CD4-positive, alpha-beta memory T cell (primary cell): ENCODE measurements at regions of chr10 and their contacts with region 1.

Region 1: GRCh38 chr10:74826142-74827044 is at the start of gene KAT6B:
- DNase-seq: peak; percentile 100
- H3K4me3 ChIP-seq: peak within 1 kb of the TSS; percentile 63 to 90
- H3K4me3 Mint-ChIP-seq: peak within 1 kb of the TSS; percentile 87 to 96 (median 94)
- H3K27ac ChIP-seq: peak within 1 kb of the TSS; percentile 93
- H3K27ac Mint-ChIP-seq: peak within 1 kb of the TSS; percentile 91 to 99 (median 98)
- H3K4me1 ChIP-seq: peaks cover 53% of the 10 kb centered on the region
- H3K4me1 Mint-ChIP-seq: peaks cover 60 to 80% (median 63%) of the 10 kb centered on the region in 4 donors
- H3K27me3 ChIP-seq: no peaks in the 10 kb centered on the region
- H3K27me3 Mint-ChIP-seq: no peaks in the 10 kb centered on the region
- total RNA-seq, gene KAT6B: 63.6 to 63.9 TPM

Region 2: DNA sequence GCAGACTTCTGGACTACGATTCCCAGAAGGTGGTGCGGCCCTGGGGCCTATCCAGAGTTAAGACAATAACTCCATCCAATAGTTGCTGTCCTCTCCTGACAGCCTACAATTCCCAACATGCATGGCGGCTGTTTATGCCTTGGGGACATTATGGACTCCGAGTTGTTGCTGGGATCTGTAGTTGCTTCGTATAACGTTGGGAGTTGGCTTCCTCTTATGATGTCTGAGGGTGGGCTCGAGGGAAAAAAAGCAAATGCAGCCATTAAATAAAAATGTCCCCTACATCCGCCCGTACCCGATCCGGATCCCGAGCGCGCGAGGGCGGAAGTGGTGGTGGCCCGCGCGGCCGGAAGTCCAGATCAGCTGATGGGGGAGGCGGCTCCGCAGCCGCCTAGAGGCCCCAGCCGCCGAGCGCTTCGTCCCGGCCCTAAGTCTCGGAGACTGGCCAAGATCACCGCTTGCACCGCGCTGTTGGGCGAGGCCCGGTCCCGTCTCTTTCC is 1041.1 kb before region 1 on chr10 and contains the start of gene ZSWIM8:
- CTCF ChIA-PET with region 1: no interaction called
- POLR2A ChIA-PET with region 1: no interaction called
- intact Hi-C with region 1: loop called (anchors 10 kb)
- DNase-seq: peak; percentile 85 to 96 (median 89)
- H3K4me3 ChIP-seq: peak within 1 kb of the TSS; percentile 62 to 64
- H3K4me3 Mint-ChIP-seq: peak within 1 kb of the TSS; percentile 94 to 99 (median 98)
- H3K27ac ChIP-seq: peak within 1 kb of the TSS; percentile 77
- H3K27ac Mint-ChIP-seq: peak within 1 kb of the TSS; percentile 95 to 99 (median 99)
- H3K4me1 ChIP-seq: peaks cover 54% of the 10 kb centered on the region
- H3K4me1 Mint-ChIP-seq: peaks cover 35 to 67% (median 50%) of the 10 kb centered on the region in 4 donors
- H3K27me3 ChIP-seq: no peaks in the 10 kb centered on the region
- H3K27me3 Mint-ChIP-seq: peaks cover 2% of the 10 kb centered on the region in 2 donors
- total RNA-seq, gene ZSWIM8: 93.3 to 100 TPM

Region 3: DNA sequence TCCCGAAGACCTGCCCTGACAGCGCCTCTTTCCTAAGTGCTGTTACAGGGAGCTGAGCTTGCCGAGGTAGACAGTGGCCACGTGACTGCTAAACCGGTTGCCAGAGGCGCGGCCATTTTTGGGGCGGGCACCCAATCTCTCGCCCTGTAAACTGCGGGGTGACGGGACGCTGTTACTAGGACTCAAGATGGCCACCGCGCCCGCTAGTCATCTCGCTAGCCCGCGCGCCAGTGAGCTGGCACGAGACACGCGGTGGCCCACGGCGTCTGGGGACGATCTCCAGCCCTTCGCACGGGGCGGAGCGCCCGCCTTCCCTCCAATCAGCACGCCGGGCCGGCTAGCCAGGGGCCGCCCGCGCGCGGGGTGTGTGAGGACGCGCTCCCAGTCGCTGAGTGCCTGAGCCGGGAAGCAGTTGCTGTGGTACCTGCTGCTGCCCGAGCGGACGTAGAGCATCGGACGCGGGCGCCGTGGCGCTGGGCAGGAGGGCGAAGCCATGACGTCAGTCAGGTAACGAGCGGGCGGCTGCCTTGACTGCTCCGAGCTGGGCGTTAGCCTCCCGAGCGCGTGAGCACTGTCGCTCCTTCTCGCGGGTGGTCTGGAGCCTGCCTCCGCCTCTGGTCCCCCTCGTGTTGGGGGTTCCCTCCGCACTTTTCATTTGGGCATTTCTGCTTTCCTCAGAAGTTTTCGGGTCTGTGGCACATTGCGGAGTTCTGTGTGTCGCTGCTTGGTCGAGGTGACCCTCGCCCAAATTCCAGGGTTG is 649.8 kb before region 1 on chr10:
- CTCF ChIA-PET with region 1: no interaction called
- POLR2A ChIA-PET with region 1: interaction called, 5 read pairs
- intact Hi-C with region 1: loop called (anchors 1 kb)
- DNase-seq: peak; percentile 95 to 98 (median 97)
- H3K4me3 ChIP-seq: peak overlapping the region; percentile 82 to 92
- H3K4me3 Mint-ChIP-seq: peak overlapping the region; percentile 90 to 94 (median 93)
- H3K27ac ChIP-seq: peak overlapping the region; percentile 76
- H3K27ac Mint-ChIP-seq: peak overlapping the region; percentile 96 to 98 (median 97)
- H3K4me1 ChIP-seq: peaks cover 42% of the 10 kb centered on the region
- H3K4me1 Mint-ChIP-seq: peaks cover 24 to 49% (median 39%) of the 10 kb centered on the region in 4 donors
- H3K27me3 ChIP-seq: no peaks in the 10 kb centered on the region
- H3K27me3 Mint-ChIP-seq: no peaks in the 10 kb centered on the region

Region 4: GRCh38 chr10:74589226-74589673 is 237.1 kb before region 1 on chr10:
- CTCF ChIA-PET with region 1: interaction called, 3 read pairs
- POLR2A ChIA-PET with region 1: interaction called, 58 read pairs
- intact Hi-C with region 1: loop called (anchors 1 kb)
- DNase-seq: peak; percentile 89 to 98 (median 95)
- H3K4me3 ChIP-seq: no peak overlapping the region
- H3K4me3 Mint-ChIP-seq: peak overlapping the region in 7 of 8 donors; percentile 19 to 84 (median 63)
- H3K27ac ChIP-seq: peak overlapping the region; percentile 64
- H3K27ac Mint-ChIP-seq: peak overlapping the region; percentile 88 to 97 (median 95)
- H3K4me1 ChIP-seq: peaks cover 63% of the 10 kb centered on the region
- H3K4me1 Mint-ChIP-seq: peaks cover 44 to 62% (median 53%) of the 10 kb centered on the region in 4 donors
- H3K27me3 ChIP-seq: no peaks in the 10 kb centered on the region
- H3K27me3 Mint-ChIP-seq: no peaks in the 10 kb centered on the region

Region 5: DNA sequence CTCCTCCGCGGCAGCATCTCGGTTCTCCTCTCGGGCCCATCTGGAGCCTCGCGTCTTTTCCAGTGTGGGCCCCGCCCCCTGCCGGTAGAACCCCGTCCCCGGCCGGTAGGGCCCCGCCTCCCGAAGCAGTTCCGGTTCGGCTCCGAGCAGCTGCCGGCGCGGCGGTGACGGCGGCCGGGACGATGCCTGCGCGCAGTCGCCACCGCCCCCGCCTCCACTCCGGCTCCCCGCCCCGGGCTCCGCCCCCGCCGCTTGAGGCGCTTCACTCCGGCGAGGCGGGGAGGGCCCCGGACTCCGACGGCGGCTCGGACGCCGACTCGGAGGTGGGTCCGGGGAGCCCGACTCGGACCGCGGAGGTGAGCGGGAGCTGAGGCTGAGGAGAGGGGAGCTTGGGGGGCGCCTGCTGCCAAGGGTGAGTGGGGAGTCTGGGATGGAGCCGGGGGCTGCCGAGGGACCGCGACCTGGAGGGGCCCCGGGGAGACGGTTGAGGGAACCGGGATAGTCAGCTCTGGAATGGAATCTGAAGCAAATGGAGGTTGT is 285.0 kb after region 1 on chr10 and contains the start of gene SAMD8:
- CTCF ChIA-PET with region 1: no interaction called
- POLR2A ChIA-PET with region 1: interaction called, 10 read pairs
- intact Hi-C with region 1: loop called (anchors 1 kb)
- DNase-seq: peak; percentile 93 to 97 (median 95)
- H3K4me3 ChIP-seq: peak within 1 kb of the TSS; percentile 61 to 88
- H3K4me3 Mint-ChIP-seq: peak within 1 kb of the TSS; percentile 86 to 98 (median 90)
- H3K27ac ChIP-seq: peak within 1 kb of the TSS; percentile 92
- H3K27ac Mint-ChIP-seq: peak within 1 kb of the TSS; percentile 92 to 97 (median 97)
- H3K4me1 ChIP-seq: peaks cover 42% of the 10 kb centered on the region
- H3K4me1 Mint-ChIP-seq: peaks cover 27 to 60% (median 48%) of the 10 kb centered on the region in 4 donors
- H3K27me3 ChIP-seq: no peaks in the 10 kb centered on the region
- H3K27me3 Mint-ChIP-seq: no peaks in the 10 kb centered on the region
- total RNA-seq, gene SAMD8: 17.9 to 20.6 TPM